HepG2 (cell line): ENCODE measurements at regions of chr9 and their contacts with region 1.

Region 1: GRCh38 chr9:122099271-122099869 is 6.3 kb upstream of the TTLL11 start:
- DNase-seq: peak; percentile 60
- ATAC-seq: peak; percentile 88
- H3K4me3 ChIP-seq: peak overlapping the region in 1 of 3 experiments; percentile 56; a peak in 1 of 6 replicates
- H3K27ac ChIP-seq: no peak overlapping the region
- H3K4me1 ChIP-seq: peaks cover 23% of the 10 kb centered on the region
- H3K27me3 ChIP-seq: peaks cover 0 to 13% of the 10 kb centered on the region in 2 experiments
- CTCF ChIP-seq: peak; percentile 83
- EP300 ChIP-seq: no peak
- POLR2A ChIP-seq: no peak
- RAD21 ChIP-seq: peak; percentile 81

Region 2: GRCh38 chr9:122125158-122125508 is 25.8 kb after region 1 on chr9:
- CTCF ChIA-PET with region 1: interaction called, 87 read pairs
- POLR2A ChIA-PET with region 1: interaction called, 4 read pairs
- in situ Hi-C with region 1: no loop called
- intact Hi-C with region 1: loop called (anchors 1 kb)
- DNase-seq: peak; percentile 53
- ATAC-seq: peak; percentile 84
- H3K4me3 ChIP-seq: peak overlapping the region in 2 of 3 experiments; percentile 21 to 64; a peak in 2 of 6 replicates
- H3K27ac ChIP-seq: no peak overlapping the region
- H3K4me1 ChIP-seq: peaks cover 17% of the 10 kb centered on the region
- H3K27me3 ChIP-seq: peaks cover 0 to 5% of the 10 kb centered on the region in 2 experiments; a peak in 1 of 5 replicates
- CTCF ChIP-seq: peak; percentile 99
- EP300 ChIP-seq: no peak
- POLR2A ChIP-seq: no peak
- RAD21 ChIP-seq: peak; percentile 98